Endothelial cell of umbilical vein (primary cell): ENCODE measurements at regions of chr6 and their contacts with region 1.

Region 1: DNA sequence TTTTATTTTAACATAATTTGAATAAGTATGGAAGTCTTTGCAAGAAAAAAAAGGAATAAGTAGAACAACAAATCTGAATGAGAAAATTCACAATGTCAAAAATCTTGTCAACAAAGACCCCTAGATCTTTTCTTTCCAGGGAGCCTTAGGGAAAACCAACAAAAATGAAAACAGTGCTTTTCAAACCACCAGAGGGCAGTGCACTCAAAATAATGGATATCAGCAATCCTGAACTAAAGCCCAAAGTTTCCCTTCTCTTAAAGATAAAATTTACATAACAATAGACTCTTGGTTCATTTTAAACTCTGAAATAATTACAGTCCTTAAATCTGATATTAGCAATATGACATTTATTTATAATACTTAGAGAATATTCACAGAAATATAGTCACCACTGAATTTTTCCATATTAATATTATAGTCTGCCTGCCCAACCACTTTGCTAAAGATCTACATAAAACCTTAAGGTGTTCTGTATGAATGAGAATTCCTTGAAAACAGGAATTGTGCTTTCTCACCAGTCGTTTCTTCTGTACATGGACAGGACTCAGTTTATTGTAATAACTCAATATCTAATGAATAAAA is 105.3 kb upstream of the BMP5 start:
- DNase-seq: peak; percentile 66
- H3K4me3 ChIP-seq: no peak overlapping the region
- H3K27ac ChIP-seq: no peak overlapping the region
- H3K4me1 ChIP-seq: no peaks in the 10 kb centered on the region
- H3K27me3 ChIP-seq: no peaks in the 10 kb centered on the region
- CTCF ChIP-seq: peak; percentile 39
- POLR2A ChIP-seq: no peak

Region 2: DNA sequence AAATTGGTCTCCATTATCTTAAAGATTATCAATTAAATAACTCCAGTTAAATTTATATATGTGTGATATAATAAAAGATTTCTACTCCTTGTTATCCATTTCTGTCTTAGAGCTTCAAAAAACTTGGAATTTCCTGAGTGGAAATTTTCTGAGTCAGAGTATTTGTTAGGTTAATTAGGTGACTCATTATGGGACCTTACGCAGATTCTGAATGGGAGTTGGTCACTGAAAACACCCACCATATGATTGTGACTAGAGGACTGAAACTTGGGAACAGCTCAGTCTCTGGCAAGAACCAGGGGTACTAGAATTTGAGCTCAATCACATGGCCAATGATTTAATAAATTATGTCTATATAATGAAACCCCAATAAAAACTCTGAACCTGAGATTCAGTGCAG is 276.3 kb before region 1 on chr6:
- CTCF ChIA-PET with region 1: no interaction called
- POLR2A ChIA-PET with region 1: no interaction called
- dilution Hi-C with region 1: no loop called
- intact Hi-C with region 1: no loop called
- DNase-seq: peak; percentile 84
- H3K4me3 ChIP-seq: no peak overlapping the region
- H3K27ac ChIP-seq: peak overlapping the region; percentile 28
- H3K4me1 ChIP-seq: peaks cover 15% of the 10 kb centered on the region
- H3K27me3 ChIP-seq: no peaks in the 10 kb centered on the region
- CTCF ChIP-seq: no peak
- POLR2A ChIP-seq: no peak

Region 3: DNA sequence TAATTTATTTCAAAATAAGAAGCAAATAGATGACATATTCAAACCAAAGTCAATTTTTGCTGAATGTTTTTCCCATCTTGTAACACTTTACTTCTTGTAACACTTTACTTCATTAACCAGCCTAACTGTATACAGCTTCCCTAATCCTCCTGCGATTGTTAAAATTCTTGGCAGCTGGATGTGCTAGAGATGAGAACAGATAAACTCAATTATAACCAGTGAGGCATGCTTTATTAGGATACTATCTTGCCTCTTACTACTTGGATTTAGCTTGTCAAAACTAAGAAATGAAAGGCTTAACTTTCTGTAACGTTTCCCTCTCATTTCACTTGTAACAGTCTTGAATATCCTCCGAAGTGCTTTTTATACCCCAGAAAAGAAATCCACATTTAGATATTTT is 11.2 kb before region 1 on chr6:
- CTCF ChIA-PET with region 1: no interaction called
- POLR2A ChIA-PET with region 1: no interaction called
- dilution Hi-C with region 1: no loop called
- intact Hi-C with region 1: no loop called
- DNase-seq: no peak
- H3K4me3 ChIP-seq: no peak overlapping the region
- H3K27ac ChIP-seq: no peak overlapping the region
- H3K4me1 ChIP-seq: peaks cover under 1% of the 10 kb centered on the region
- H3K27me3 ChIP-seq: no peaks in the 10 kb centered on the region
- CTCF ChIP-seq: no peak
- POLR2A ChIP-seq: no peak

Region 4: GRCh38 chr6:56101141-56101553 is 120.4 kb after region 1 on chr6:
- CTCF ChIA-PET with region 1: no interaction called
- POLR2A ChIA-PET with region 1: no interaction called
- dilution Hi-C with region 1: no loop called
- intact Hi-C with region 1: no loop called
- DNase-seq: no peak
- H3K4me3 ChIP-seq: no peak overlapping the region
- H3K27ac ChIP-seq: no peak overlapping the region
- H3K4me1 ChIP-seq: peaks cover 13% of the 10 kb centered on the region
- H3K27me3 ChIP-seq: no peaks in the 10 kb centered on the region
- CTCF ChIP-seq: no peak
- POLR2A ChIP-seq: no peak

Region 5: GRCh38 chr6:56144538-56145324 is 164.0 kb after region 1 on chr6:
- CTCF ChIA-PET with region 1: no interaction called
- POLR2A ChIA-PET with region 1: no interaction called
- dilution Hi-C with region 1: no loop called
- intact Hi-C with region 1: loop called (anchors 2 kb)
- DNase-seq: peak; percentile 41
- H3K4me3 ChIP-seq: no peak overlapping the region
- H3K27ac ChIP-seq: no peak overlapping the region
- H3K4me1 ChIP-seq: peaks cover 33% of the 10 kb centered on the region
- H3K27me3 ChIP-seq: no peaks in the 10 kb centered on the region
- CTCF ChIP-seq: no peak
- POLR2A ChIP-seq: no peak

Region 6: DNA sequence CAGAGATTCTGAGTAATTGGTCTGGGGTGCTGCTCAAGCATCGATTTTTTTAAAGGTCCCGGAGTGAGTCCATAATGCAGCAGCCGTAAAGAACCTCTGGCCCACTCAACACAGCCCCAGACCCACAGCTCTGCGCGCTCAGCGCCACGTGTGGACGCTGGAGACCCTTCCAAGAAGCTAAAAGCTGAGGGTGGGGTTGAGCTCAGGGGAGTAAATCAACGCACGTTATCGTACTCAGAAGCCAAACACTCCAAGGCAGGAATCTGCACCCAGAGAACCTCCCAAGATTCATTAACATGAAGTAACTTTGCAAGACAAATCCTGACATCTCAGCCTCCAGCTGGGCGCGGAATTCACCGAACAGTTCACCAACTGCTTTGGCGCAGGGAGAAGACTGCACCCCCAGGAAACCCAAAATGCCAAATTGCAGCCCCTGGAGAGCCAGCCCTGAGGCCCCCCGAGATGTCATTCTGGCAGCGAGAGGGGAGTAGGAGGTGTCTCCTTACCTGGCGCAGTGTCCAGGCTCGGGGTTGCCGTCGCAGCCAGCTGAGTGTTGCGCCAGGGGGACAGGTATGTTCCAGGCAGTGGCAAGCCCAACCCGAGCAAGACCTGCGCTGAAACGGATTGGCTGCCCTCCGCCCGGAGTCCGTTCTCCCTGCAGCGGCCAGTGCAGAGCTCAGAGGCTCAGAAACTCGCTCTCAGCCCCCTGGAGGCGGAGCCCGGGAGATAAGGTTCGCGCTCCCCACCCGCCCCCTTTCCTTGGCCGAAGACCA is 266.3 kb after region 1 on chr6 and contains the start of gene COL21A1:
- CTCF ChIA-PET with region 1: interaction called, 4 read pairs
- POLR2A ChIA-PET with region 1: no interaction called
- dilution Hi-C with region 1: no loop called
- intact Hi-C with region 1: loop called (anchors 1 kb)
- DNase-seq: peak; percentile 35
- H3K4me3 ChIP-seq: peak within 1 kb of the TSS in 2 of 3 experiments; percentile 25 to 33
- H3K27ac ChIP-seq: no peak within 1 kb of the TSS
- H3K4me1 ChIP-seq: no peaks in the 10 kb centered on the region
- H3K27me3 ChIP-seq: peaks cover 3% of the 10 kb centered on the region in 2 experiments
- CTCF ChIP-seq: peak; percentile 25 to 64
- POLR2A ChIP-seq: no peak
- total RNA-seq, gene COL21A1: 1.4 TPM in 2 replicates